ENCODE measurements at regions of chr3 and their contacts with region 1.

Region 1: DNA sequence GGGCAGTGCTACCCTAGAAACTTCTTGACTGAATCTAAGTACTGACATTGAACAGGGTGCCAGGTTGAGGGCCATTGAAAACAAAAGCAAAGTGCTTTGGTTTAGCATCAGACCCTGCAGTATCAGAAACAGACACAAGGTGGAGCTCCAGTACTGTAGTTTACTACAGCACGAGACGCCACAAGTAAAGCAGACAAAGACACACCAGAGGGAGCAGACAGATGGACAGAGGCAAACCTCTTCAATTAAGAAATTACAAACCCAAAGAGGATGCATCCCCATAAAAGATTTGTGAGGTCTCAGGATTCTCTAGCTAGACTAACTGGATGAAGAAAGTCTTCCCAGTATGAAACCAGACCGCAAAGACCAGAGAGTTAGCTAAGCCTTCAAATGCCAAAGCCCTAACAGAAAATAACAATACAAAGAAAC is 16.6 kb downstream of the TOP2B start:
- DNase-seq: peak in 1 of 3 donors; percentile 96
- ATAC-seq: peak; percentile 100
- H3K4me3 ChIP-seq: no peak overlapping the region
- H3K4me1 ChIP-seq: no peaks in the 10 kb centered on the region
- CTCF ChIP-seq: peak; percentile 86

Region 2: GRCh38 chr3:25856902-25857518 is 208.9 kb after region 1 on chr3:
- intact Hi-C with region 1: loop called in 1 of 2 experiments (anchors 10 kb)
- DNase-seq: peak in 1 of 3 donors; percentile 40
- ATAC-seq: peak; percentile 64
- H3K4me3 ChIP-seq: no peak overlapping the region
- H3K4me1 ChIP-seq: no peaks in the 10 kb centered on the region
- CTCF ChIP-seq: peak; percentile 70